Cardiac septum (tissue), 1 donor: ENCODE measurements at regions of chr9 and their contacts with region 1.

Region 1: DNA sequence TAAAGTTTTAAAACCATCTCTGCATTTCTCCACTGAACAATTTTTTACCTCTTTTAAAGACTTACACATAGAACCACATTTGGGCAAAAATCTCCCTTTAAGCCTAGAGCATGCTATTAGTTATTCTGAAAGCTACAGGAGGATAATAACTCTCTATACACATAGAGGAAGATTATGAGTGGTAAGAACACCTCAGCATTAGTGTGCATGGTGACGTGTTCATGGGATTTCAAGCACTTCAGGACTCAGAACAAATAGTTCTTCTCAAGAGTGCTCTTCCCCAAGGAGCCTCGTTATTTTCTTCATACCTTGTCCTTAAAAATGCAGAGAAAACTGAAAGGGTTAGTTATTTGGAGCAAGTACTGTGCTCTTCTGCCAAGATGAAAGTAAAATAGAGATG is 256.9 kb upstream of the TUSC1 start:
- DNase-seq: no peak

Region 2: GRCh38 chr9:25724424-25724823 is 210.8 kb before region 1 on chr9:
- intact Hi-C with region 1: no loop called
- DNase-seq: no peak

Region 3: DNA sequence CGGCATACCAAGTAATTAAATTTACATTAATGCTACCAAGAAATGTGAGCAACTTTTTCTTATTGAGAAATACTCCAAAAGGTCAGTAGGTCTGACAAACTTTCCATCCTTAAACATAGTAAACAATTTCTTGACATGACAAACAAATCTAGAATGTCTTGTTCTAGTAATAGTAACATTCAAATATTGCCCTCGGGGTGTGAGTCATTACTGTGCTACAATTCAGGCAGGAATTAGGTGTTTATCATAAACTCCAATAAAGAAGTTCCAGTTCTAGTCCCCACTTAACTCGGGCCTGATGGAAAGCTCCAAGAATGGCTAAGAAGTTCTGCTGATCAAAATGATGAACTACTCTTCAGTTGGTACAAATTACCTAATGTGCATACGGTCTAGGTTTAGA is 21.4 kb before region 1 on chr9:
- intact Hi-C with region 1: loop called (anchors 2 kb)
- DNase-seq: no peak